ENCODE measurements at regions of chr2 and their contacts with region 1.

Region 1: DNA sequence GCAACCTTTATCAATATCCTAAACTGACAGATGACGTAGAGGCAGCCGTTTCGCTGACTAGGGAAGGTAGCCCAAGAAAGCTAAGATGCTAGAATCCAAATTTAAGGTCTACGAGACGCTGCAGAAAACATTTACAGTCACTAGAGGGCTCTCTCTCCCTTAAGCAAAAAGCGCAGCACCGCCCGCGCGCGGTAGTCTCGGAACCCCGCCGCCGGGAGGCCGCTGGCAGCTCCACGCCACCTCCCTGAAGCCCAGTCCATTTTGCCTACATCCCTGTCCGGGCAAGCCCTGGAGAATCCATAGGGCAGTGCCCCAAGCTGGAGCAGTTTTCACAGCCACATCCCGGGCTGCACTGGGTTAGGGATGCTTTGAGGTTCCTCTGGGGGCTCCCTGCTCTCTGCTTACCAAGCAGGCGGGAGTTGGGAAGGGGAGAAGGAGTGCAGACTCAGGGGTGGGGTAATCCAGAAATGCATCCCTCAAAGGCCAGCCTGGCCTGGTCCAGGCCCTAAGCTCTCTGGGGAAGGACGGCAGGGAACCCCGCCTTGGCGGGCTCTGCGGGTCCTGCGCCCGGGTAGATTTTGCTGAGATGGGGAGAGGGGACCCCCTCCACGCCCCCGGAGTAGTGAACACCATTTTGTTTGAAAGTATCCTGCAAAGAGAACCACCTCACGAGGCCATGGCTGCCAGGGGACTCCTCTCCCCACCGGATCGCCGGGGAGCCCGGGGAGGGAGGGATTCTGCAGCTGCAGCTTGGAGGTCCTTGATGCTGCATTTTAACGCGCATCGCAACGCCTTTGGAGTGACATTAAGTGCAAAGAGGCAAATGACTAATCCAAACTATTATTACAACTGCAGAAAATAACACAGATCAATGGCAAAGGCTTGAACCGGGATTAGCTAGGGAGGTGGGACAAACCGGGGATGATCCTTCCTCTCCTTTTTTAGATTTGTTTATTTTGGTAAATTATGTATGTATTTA is 1.3 kb upstream of the DPYSL5 start:
- DNase-seq: peak; percentile 64
- H3K4me3 Mint-ChIP-seq: peak overlapping the region; percentile 21
- H3K27ac Mint-ChIP-seq: no peak overlapping the region
- H3K4me1 Mint-ChIP-seq: peaks cover 15% of the 10 kb centered on the region
- H3K27me3 Mint-ChIP-seq: peaks cover 36% of the 10 kb centered on the region

Region 2: DNA sequence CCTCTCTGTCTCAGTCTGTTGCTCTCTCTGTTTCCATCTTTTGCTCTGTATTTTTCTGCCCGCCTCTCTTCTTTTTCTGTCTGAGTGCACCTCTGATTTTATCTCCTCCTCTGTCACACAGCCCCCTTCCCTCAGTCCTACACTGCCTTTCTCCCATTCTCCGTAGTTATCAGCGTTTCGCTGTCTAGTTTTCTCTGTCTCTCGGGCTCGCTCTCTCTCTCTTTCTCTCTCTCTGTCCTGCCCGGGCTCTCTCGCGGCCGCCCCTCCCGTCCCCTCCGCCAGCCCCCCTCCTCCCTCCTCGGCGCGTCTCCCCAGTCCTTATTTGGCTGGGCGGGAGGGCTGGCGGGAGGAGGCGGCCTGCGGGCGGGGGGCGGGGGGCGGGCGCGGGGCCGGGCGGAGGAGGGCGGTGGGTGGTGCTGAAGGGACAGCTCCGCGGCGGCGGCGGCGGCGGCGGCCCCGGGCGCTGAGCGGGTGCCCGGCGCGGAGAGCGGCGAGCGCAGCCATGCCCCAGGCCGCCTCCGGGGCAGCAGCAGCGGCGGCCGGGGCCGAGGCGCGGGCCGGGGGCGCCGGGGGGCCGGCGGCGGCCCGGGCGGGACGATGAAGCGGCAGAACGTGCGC is 154.2 kb before region 1 on chr2 and contains the start of gene KCNK3:
- CTCF ChIA-PET with region 1: no interaction called
- intact Hi-C with region 1: no loop called
- DNase-seq: peak; percentile 53
- H3K4me3 Mint-ChIP-seq: no peak within 1 kb of the TSS
- H3K27ac Mint-ChIP-seq: no peak within 1 kb of the TSS
- H3K4me1 Mint-ChIP-seq: peaks cover 5% of the 10 kb centered on the region
- H3K27me3 Mint-ChIP-seq: peaks cover 57% of the 10 kb centered on the region
- total RNA-seq, gene KCNK3: not detected

Region 3: GRCh38 chr2:26785431-26786206 is 61.0 kb before region 1 on chr2 and contains the start of gene CENPA:
- CTCF ChIA-PET with region 1: interaction called, 3 read pairs
- intact Hi-C with region 1: loop called (anchors 5 kb)
- DNase-seq: peak; percentile 98
- H3K4me3 Mint-ChIP-seq: peak within 1 kb of the TSS; percentile 72
- H3K27ac Mint-ChIP-seq: peak within 1 kb of the TSS; percentile 15
- H3K4me1 Mint-ChIP-seq: peaks cover 10% of the 10 kb centered on the region
- H3K27me3 Mint-ChIP-seq: peaks cover 20% of the 10 kb centered on the region
- total RNA-seq, gene CENPA: 42.9 to 43.6 TPM

Region 4: DNA sequence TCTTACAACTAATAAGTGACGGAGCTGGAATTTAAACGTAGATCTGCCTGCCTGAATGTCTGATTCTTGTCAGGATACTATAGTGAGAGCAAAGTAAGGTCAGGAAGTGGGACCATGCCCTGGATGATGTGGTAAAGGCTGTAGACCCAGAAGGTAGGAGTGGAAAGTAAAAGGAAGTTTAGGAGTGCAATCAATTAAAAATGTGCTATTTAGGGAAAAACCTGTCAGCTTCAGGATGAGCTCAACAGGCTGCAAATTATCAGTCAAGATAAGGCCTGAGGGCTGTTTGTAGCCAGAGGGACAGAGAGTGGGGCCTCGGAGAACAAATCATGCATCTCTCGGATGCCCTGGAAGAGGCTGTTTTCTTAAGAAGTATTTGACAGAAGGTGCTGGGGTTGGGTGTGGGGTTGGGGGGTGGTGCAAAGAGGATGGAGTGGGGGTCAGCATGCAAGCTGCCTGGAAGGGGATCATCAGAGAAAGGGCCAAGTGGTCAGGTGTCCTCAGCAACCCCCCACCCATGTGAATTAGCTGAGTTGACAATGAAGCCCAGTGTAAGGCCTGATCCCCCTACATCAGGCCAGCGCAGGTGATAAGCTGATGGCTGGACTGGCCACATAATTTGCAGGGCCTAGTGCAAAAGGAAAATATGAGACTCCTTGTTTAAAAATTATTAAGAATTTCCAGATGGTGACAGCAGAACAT is 70.7 kb after region 1 on chr2:
- CTCF ChIA-PET with region 1: interaction called, 43 read pairs
- intact Hi-C with region 1: loop called (anchors 1 kb)
- DNase-seq: no peak
- H3K4me3 Mint-ChIP-seq: no peak overlapping the region
- H3K27ac Mint-ChIP-seq: no peak overlapping the region
- H3K4me1 Mint-ChIP-seq: no peaks in the 10 kb centered on the region
- H3K27me3 Mint-ChIP-seq: peaks cover 4% of the 10 kb centered on the region

Region 5: DNA sequence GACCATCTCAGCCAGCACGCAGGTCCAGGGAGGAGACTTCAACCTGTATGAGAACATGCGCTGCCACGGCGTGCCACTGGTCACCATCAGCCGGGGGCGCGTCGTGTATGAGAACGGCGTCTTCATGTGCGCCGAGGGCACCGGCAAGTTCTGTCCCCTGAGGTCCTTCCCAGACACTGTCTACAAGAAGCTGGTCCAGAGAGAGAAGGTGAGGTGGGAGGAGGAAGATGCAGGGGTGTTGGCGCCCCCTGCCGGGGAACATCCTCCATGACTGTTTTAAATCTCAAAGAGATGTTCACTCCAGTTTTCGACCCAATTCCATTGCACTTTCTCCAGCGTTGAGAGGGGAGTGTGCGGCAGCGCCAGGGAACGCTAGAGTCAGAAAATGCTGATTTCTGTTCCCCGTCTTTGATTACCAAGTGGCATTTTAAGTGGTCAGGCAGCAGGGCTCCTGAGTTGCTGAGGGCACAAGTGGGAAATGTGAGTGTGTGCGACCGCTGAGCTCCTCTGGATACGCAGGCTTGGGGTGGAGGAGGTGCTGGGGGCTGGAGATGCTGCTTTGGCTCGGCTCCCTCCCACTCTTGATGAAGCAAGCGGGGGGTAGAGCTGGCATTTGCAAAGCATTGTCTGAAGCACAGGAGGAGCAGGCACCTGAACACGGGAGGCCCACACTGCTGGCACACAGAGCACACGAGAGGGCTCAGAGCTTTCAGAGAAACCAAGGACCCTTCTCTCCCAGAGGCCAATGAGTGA is 96.1 kb after region 1 on chr2:
- CTCF ChIA-PET with region 1: interaction called, 123 read pairs
- intact Hi-C with region 1: loop called (anchors 1 kb)
- DNase-seq: peak; percentile 81
- H3K4me3 Mint-ChIP-seq: no peak overlapping the region
- H3K27ac Mint-ChIP-seq: no peak overlapping the region
- H3K4me1 Mint-ChIP-seq: peaks cover 2% of the 10 kb centered on the region
- H3K27me3 Mint-ChIP-seq: peaks cover 6% of the 10 kb centered on the region

Region 6: GRCh38 chr2:27148801-27149439 is 302.3 kb after region 1 on chr2 and contains the start of gene TCF23:
- CTCF ChIA-PET with region 1: no interaction called
- intact Hi-C with region 1: no loop called
- DNase-seq: no peak
- H3K4me3 Mint-ChIP-seq: no peak within 1 kb of the TSS
- H3K27ac Mint-ChIP-seq: no peak within 1 kb of the TSS
- H3K4me1 Mint-ChIP-seq: no peaks in the 10 kb centered on the region
- H3K27me3 Mint-ChIP-seq: peaks cover 3% of the 10 kb centered on the region
- total RNA-seq, gene TCF23: not detected